ENCODE measurements at regions of chr2 and their contacts with region 1.

Region 1: DNA sequence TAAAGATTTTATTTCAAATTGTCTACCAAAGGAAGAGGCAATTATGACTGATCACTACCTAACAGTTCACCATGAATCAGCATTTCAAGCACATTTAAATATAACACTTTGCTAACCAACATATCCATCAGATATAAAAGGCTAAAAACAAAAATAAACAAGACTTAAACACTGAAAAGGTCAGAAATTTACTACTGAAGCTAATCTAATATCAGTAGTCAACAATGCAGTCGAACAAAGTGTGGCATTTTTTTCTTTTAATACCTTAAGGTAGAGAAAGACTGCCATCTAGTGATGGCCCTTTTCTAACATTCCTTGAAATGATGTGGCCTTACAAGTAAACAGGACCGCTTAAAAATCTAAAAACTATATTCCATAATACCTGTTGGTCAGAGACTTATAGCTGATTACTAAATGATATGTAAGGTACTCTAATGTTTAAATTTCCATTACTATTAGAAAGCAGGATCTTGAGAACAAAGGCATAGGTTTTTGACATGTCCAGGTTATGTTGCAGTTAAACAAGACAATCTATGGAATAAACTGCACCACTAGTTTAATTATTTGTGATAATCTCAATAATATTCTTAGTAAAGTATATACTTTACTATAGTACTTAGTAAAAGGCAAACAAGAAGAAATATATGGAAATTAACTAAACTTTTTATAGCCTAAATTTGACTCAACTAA is 80.0 kb downstream of the EXOC6B start:
- DNase-seq: no peak
- H3K4me3 Mint-ChIP-seq: no peak overlapping the region
- H3K27ac Mint-ChIP-seq: no peak overlapping the region
- H3K4me1 Mint-ChIP-seq: no peaks in the 10 kb centered on the region
- H3K27me3 Mint-ChIP-seq: no peaks in the 10 kb centered on the region

Region 2: DNA sequence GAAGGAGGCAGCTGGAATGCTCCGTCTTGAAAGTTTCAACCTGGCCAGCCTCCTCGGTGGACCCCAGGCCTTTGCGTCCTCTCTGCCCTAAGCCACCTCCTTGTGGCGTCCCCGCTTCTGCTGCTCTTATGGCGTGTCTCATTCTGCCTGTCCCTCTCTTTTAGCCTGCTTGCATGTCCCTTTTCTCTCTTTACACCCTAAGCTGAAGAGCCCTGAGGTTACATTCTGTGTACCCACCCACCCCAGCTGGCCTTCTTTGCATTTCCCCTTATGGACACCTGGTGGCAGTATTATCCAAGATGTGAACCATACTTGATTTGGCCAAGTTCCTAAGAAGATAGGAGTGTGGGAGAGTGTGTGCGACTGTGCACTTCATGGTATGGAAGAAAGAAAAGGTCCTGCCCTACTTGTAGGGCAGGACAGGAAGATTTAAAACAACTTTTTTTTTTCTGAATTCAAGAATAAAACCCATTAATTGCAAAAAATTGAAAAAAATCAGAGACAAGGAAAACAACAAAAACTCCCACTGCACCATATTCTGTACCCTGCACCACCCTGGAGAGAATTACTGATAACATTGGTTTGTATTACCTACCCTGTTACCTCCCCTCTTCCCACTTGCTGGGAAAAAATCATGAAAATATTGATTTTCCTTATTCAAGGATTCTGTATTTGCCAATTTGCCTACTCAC is 1215.0 kb before region 1 on chr2:
- CTCF ChIA-PET with region 1: no interaction called
- POLR2A ChIA-PET with region 1: no interaction called
- intact Hi-C with region 1: loop called (anchors 10 kb)
- DNase-seq: peak; percentile 28
- H3K4me3 Mint-ChIP-seq: no peak overlapping the region
- H3K27ac Mint-ChIP-seq: no peak overlapping the region
- H3K4me1 Mint-ChIP-seq: peaks cover 2% of the 10 kb centered on the region
- H3K27me3 Mint-ChIP-seq: peaks cover 28% of the 10 kb centered on the region

Region 3: DNA sequence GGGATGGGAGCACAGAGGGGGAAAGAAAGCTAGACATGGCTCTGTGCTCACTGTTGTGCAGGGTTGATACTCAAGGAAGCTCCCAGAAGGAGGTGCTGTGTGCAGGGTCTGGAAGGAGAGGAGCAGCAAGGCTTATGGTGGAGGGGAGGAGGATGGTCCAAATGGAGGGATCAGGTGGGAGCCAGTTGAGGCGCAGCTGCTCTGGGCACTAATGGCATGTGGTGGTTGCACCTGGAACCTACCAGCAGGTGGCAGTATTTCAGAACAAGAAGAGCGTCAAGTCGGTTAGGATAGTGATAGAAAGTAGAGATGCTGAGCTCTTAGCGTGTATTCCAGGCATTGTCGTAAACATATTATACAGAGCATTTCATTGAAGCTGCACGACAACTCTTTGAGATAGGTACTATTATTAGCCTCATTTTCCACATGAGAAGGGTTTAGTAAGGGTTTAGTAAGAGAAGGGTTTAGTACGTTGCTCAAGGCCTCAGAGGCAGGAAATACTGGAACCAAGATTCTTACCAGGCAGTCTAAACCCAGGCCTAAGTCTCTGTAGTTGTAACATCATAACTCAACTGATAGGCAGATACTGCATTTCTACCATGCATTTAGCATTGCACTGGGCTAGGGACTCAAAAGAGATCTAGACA is 821.8 kb before region 1 on chr2:
- CTCF ChIA-PET with region 1: interaction called, 7 read pairs
- POLR2A ChIA-PET with region 1: no interaction called
- intact Hi-C with region 1: loop called (anchors 1 kb)
- DNase-seq: peak; percentile 63
- H3K4me3 Mint-ChIP-seq: no peak overlapping the region
- H3K27ac Mint-ChIP-seq: no peak overlapping the region
- H3K4me1 Mint-ChIP-seq: no peaks in the 10 kb centered on the region
- H3K27me3 Mint-ChIP-seq: no peaks in the 10 kb centered on the region

Region 4: GRCh38 chr2:72605836-72606442 is 139.9 kb before region 1 on chr2:
- CTCF ChIA-PET with region 1: interaction called, 3 read pairs
- POLR2A ChIA-PET with region 1: no interaction called
- intact Hi-C with region 1: loop called (anchors 10 kb)
- DNase-seq: no peak
- H3K4me3 Mint-ChIP-seq: no peak overlapping the region
- H3K27ac Mint-ChIP-seq: no peak overlapping the region
- H3K4me1 Mint-ChIP-seq: peaks cover 15% of the 10 kb centered on the region
- H3K27me3 Mint-ChIP-seq: no peaks in the 10 kb centered on the region

Region 5: GRCh38 chr2:72649810-72650209 is 96.0 kb before region 1 on chr2:
- CTCF ChIA-PET with region 1: no interaction called
- POLR2A ChIA-PET with region 1: no interaction called
- intact Hi-C with region 1: no loop called
- DNase-seq: no peak
- H3K4me3 Mint-ChIP-seq: no peak overlapping the region
- H3K27ac Mint-ChIP-seq: no peak overlapping the region
- H3K4me1 Mint-ChIP-seq: no peaks in the 10 kb centered on the region
- H3K27me3 Mint-ChIP-seq: no peaks in the 10 kb centered on the region

Region 6: GRCh38 chr2:72778410-72778809 is 32.6 kb after region 1 on chr2:
- CTCF ChIA-PET with region 1: no interaction called
- POLR2A ChIA-PET with region 1: no interaction called
- intact Hi-C with region 1: no loop called
- DNase-seq: no peak
- H3K4me3 Mint-ChIP-seq: no peak overlapping the region
- H3K27ac Mint-ChIP-seq: no peak overlapping the region
- H3K4me1 Mint-ChIP-seq: peaks cover 7% of the 10 kb centered on the region
- H3K27me3 Mint-ChIP-seq: no peaks in the 10 kb centered on the region